Posterior cingulate gyrus (tissue), 11 donors: ENCODE measurements at regions of chr12 and their contacts with region 1.

Region 1: DNA sequence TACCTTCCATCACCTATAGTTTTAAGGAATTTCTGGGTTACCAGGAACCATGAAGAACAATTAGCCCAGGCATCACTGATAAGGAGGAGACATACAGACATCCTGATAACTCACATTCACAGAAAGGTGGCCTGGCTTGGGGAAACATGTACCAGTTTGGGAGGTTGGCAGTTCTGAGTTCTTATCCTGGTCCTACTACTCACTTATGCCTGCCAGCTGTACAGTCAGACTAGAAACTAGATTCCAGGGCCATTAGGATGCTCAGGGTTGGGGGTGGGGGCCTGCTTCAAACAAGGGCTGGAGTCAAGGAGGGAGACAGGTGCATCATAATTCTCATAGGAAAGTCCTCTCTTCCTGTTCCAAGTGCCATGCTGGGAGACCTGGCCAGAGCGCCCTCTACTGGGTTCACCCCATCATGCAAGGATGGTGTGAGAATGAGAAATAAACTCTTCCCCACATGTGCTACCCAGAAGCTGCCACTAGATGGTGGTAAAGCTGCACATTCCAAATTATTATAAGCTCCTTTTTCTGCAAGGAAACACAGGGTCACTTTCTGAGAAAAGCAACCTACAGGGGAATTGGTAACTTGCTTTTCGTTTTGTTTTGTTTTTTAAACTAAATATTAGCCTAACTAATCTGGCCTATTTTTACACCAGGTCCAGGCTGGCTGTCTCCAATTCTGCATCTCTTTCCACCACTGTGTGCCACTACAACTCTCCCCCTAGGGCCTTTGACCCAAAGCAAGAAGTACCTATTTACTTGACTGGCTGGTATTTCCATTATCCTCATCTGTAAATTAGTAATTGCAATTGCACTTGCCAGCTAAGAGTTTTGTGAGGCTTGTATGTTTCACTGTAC is 14.5 kb downstream of the OAS2 start:
- DNase-seq: peak in 5 of 10 donors; percentile 18 to 82 (median 41)

Region 2: GRCh38 chr12:112645586-112645985 is 347.2 kb before region 1 on chr12:
- intact Hi-C with region 1: no loop called
- DNase-seq: no peak

Region 3: DNA sequence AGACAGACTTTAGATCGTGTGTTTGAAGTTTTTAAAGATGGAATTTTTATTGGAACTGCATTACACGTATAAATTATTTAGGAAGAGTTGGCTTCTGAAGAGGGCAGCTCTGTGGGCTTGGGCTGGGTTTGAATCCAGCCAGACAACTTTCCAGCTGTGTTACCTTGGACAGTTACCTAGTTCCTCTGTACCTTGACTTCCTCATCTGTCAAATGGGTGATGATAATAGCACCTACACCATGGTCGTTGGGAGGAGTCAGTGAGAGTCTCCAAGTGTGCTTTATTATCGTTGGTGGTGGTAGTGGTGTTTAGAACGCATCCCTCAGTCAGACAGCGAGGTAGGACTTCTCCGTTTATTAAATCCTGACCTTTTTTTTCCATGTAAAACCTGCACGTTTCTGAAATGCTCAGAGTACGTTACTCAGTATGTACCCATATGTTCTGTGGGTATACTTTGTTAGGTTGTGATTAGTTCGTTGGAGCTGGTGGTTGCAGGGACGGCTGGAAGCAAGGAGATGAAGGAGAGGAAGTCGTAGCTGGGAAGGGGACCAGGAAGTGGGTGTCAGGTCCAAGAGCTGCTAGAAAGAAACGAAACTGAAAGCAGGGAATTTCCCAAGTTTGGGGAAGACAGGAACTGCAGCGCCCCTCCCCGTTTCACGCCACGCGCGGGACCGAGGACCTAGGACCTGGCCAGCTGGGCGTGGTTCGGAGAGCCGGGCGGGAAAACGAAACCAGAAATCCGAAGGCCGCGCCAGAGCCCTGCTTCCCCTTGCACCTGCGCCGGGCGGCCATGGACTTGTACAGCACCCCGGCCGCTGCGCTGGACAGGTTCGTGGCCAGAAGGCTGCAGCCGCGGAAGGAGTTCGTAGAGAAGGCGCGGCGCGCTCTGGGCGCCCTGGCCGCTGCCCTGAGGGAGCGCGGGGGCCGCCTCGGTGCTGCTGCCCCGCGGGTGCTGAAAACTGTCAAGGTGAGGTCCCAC is 54.7 kb before region 1 on chr12 and contains the start of gene OAS3:
- intact Hi-C with region 1: no loop called
- DNase-seq: peak; percentile 29 to 90 (median 46)

Region 4: GRCh38 chr12:113027726-113028125 is 35.0 kb after region 1 on chr12:
- intact Hi-C with region 1: loop called (anchors 5 kb)
- DNase-seq: no peak

Region 5: DNA sequence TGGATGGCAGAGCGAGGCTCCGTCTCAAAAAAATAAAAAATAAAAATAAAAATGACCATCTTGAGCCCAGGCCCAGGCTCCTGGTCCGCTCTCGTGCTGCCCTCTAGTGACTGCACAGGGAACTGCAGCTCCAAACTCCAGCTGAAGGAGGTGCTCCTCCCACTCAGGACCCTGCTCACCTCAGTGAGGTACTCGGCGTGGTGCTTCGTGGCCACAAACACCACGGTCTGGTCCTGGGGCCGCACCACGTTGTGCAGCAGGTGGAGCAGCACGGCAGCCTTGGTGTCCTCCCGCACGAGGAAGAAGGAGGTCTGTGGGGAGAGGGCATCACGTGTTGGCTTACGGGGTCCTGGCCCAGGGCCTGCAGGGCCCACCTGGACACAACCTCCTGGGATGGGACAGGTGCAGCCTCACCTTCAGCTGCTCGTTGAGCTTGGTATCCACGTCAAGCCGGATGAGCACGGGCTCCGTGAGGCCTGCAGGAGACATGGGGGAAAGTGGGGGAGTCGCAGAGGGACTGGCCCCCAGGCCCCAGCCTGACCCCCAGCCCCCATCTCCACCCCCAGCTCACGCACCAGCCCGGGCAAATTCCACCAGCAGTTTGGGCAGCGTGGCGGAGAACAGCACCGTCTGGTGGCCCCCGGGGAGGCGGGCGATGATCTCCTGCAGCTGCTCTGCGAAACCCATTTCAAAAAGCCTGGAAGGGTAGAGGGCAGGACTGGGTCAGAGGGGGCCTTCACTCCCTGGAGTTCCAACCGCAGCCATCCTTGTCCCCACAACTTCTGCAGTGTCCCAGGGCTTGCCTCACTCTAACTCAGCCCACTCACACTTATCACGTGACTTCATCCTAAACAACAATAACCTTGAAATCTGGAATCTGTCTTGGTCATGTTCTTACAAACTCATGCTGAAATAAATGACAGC is 182.0 kb after region 1 on chr12:
- intact Hi-C with region 1: loop called (anchors 5 kb)
- DNase-seq: peak; percentile 65 to 96 (median 86)